Psoas muscle (tissue), 8 donors: ENCODE measurements at regions of chr10 and their contacts with region 1.

Region 1: GRCh38 chr10:49115015-49115795 is at the start of gene VSTM4:
- DNase-seq: peak; percentile 48 to 67
- ATAC-seq: peak; percentile 46 to 77 (median 62)
- H3K4me3 ChIP-seq: peak within 1 kb of the TSS; percentile 69
- H3K27ac ChIP-seq: peak within 1 kb of the TSS; percentile 59
- H3K4me1 ChIP-seq: peaks cover 4% of the 10 kb centered on the region
- H3K27me3 ChIP-seq: peaks cover 0 to 6% (median 0%) of the 10 kb centered on the region in 3 donors
- CTCF ChIP-seq: no peak
- total RNA-seq, gene VSTM4: 1.8 to 4.4 (median 2.2) TPM

Region 2: GRCh38 chr10:49001402-49001801 is 113.8 kb before region 1 on chr10:
- intact Hi-C with region 1: loop called in 1 of 2 experiments (anchors 10 kb)
- DNase-seq: no peak
- ATAC-seq: no peak
- H3K4me3 ChIP-seq: no peak overlapping the region
- H3K27ac ChIP-seq: no peak overlapping the region
- H3K4me1 ChIP-seq: no peaks in the 10 kb centered on the region
- H3K27me3 ChIP-seq: no peaks in the 10 kb centered on the region
- CTCF ChIP-seq: no peak